Caco-2 (cell line): ENCODE measurements at regions of chr12 and their contacts with region 1.

Region 1: DNA sequence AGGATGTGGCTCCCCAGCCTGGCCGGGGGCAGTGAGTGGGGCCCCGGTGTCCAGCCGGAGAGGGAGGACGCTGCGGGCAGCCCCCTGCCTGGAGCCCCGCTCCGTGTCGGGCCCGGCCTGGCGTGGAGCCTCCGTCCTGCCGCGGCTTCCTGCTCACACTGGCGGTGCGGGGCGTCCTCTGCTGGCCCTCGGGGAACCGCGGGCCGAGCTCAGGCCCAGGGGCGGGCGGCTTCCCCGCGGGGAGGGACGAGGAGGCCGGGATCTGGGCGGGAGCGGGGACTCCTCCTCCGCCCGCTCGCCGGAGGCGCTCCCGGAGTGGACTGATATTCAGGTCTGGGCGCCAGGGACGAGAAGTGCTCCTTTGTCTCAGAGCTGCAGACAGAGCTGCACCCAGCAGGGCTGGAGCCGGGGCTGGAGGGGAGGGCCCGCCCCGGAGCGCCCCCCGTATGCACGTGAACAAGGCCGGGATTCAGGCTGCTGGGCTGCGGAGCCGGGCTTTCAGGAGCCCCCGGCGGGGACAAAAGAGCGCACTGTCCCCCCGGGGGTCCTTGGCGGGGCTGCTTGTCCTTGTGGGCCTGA is 2.2 kb downstream of the MMP17 start:
- DNase-seq: peak; percentile 77 to 88
- H3K4me3 ChIP-seq: peak overlapping the region; percentile 33
- H3K4me3 Mint-ChIP-seq: peak overlapping the region; percentile 72
- H3K27ac Mint-ChIP-seq: no peak overlapping the region
- H3K4me1 ChIP-seq: peaks cover 29% of the 10 kb centered on the region
- H3K4me1 Mint-ChIP-seq: no peaks in the 10 kb centered on the region
- H3K27me3 ChIP-seq: peaks cover 1% of the 10 kb centered on the region
- H3K27me3 Mint-ChIP-seq: peaks cover 7% of the 10 kb centered on the region
- CTCF ChIP-seq: peak; percentile 13 to 46

Region 2: GRCh38 chr12:131608740-131609690 is 221.4 kb before region 1 on chr12:
- CTCF ChIA-PET with region 1: no interaction called
- POLR2A ChIA-PET with region 1: no interaction called
- intact Hi-C with region 1: loop called (anchors 5 kb)
- DNase-seq: peak; percentile 54 to 73
- H3K4me3 ChIP-seq: no peak overlapping the region
- H3K4me3 Mint-ChIP-seq: no peak overlapping the region
- H3K27ac Mint-ChIP-seq: no peak overlapping the region
- H3K4me1 ChIP-seq: no peaks in the 10 kb centered on the region
- H3K4me1 Mint-ChIP-seq: no peaks in the 10 kb centered on the region
- H3K27me3 ChIP-seq: no peaks in the 10 kb centered on the region; the same call in 1 of the 2 replicates
- H3K27me3 Mint-ChIP-seq: peaks cover 23% of the 10 kb centered on the region
- CTCF ChIP-seq: peak; percentile 72 to 76

Region 3: GRCh38 chr12:131796155-131796633 is 34.2 kb before region 1 on chr12:
- CTCF ChIA-PET with region 1: interaction called, 11 read pairs
- POLR2A ChIA-PET with region 1: no interaction called
- intact Hi-C with region 1: loop called (anchors 2 kb)
- DNase-seq: peak; percentile 76 to 77
- H3K4me3 ChIP-seq: no peak overlapping the region
- H3K4me3 Mint-ChIP-seq: peak overlapping the region; percentile 32
- H3K27ac Mint-ChIP-seq: peak overlapping the region; percentile 55
- H3K4me1 ChIP-seq: peaks cover 15% of the 10 kb centered on the region
- H3K4me1 Mint-ChIP-seq: peaks cover 7% of the 10 kb centered on the region
- H3K27me3 ChIP-seq: no peaks in the 10 kb centered on the region
- H3K27me3 Mint-ChIP-seq: no peaks in the 10 kb centered on the region
- CTCF ChIP-seq: no peak

Region 4: GRCh38 chr12:131949431-131950181 is 119.2 kb after region 1 on chr12 and contains the start of gene EP400:
- CTCF ChIA-PET with region 1: no interaction called
- POLR2A ChIA-PET with region 1: no interaction called
- intact Hi-C with region 1: loop called (anchors 2 kb)
- DNase-seq: peak; percentile 93 to 95
- H3K4me3 ChIP-seq: peak within 1 kb of the TSS; percentile 92
- H3K4me3 Mint-ChIP-seq: peak within 1 kb of the TSS; percentile 81
- H3K27ac Mint-ChIP-seq: peak within 1 kb of the TSS; percentile 79
- H3K4me1 ChIP-seq: peaks cover 5% of the 10 kb centered on the region
- H3K4me1 Mint-ChIP-seq: no peaks in the 10 kb centered on the region
- H3K27me3 ChIP-seq: no peaks in the 10 kb centered on the region
- H3K27me3 Mint-ChIP-seq: no peaks in the 10 kb centered on the region
- CTCF ChIP-seq: peak; percentile 25 to 35
- total RNA-seq, gene EP400: 60.5 and 63.0 TPM in 2 replicates